CD8-positive, alpha-beta T cell (primary cell): ENCODE measurements at regions of chr6 and their contacts with region 1.

Region 1: GRCh38 chr6:110334423-110335180 is 23.5 kb downstream of the METTL24 start:
- DNase-seq: peak in 1 of 9 experiments; percentile 10
- ATAC-seq: no peak
- H3K4me3 ChIP-seq: no peak overlapping the region
- H3K4me3 Mint-ChIP-seq: no peak overlapping the region
- H3K27ac ChIP-seq: no peak overlapping the region
- H3K27ac Mint-ChIP-seq: no peak overlapping the region
- H3K4me1 ChIP-seq: peaks cover 9% of the 10 kb centered on the region
- H3K4me1 Mint-ChIP-seq: peaks cover 15% of the 10 kb centered on the region
- H3K27me3 ChIP-seq: no peaks in the 10 kb centered on the region
- H3K27me3 Mint-ChIP-seq: no peaks in the 10 kb centered on the region
- CTCF ChIP-seq: no peak

Region 2: GRCh38 chr6:109236115-109237076 is 1098.2 kb before region 1 on chr6:
- CTCF ChIA-PET with region 1: no interaction called
- POLR2A ChIA-PET with region 1: no interaction called
- intact Hi-C with region 1: loop called in 1 of 2 experiments (anchors 2 kb)
- DNase-seq: peak in 3 of 9 experiments; percentile 10 to 38 (median 38)
- ATAC-seq: peak; percentile 51
- H3K4me3 ChIP-seq: no peak overlapping the region
- H3K4me3 Mint-ChIP-seq: peak overlapping the region; percentile 52
- H3K27ac ChIP-seq: peak overlapping the region in 1 of 2 experiments; percentile 55
- H3K27ac Mint-ChIP-seq: peak overlapping the region; percentile 49
- H3K4me1 ChIP-seq: no peaks in the 10 kb centered on the region
- H3K4me1 Mint-ChIP-seq: peaks cover 12% of the 10 kb centered on the region
- H3K27me3 ChIP-seq: no peaks in the 10 kb centered on the region
- H3K27me3 Mint-ChIP-seq: no peaks in the 10 kb centered on the region
- CTCF ChIP-seq: no peak

Region 3: DNA sequence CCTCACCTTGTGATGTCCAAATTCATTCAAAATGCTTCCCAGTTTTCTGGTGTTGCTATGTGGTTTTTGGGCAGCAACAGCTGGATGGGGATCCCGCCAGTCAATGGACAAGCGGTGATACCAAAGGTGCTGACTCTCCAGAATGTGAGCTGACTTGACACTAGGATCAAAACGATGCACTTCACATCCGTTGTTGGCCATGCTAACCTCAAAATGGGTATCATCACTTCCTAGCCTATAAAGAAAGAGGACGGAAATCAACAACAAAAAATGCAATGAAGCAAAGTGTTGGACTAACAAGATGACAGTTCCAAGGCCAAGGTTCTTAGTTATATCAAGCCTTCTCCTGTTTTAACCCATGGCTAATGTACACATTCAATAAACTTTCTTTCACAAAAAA is 35.7 kb before region 1 on chr6:
- CTCF ChIA-PET with region 1: no interaction called
- POLR2A ChIA-PET with region 1: no interaction called
- intact Hi-C with region 1: no loop called
- DNase-seq: peak in 2 of 9 experiments; percentile 17 to 28
- ATAC-seq: no peak
- H3K4me3 ChIP-seq: no peak overlapping the region
- H3K4me3 Mint-ChIP-seq: peak overlapping the region; percentile 68
- H3K27ac ChIP-seq: no peak overlapping the region
- H3K27ac Mint-ChIP-seq: peak overlapping the region; percentile 77
- H3K4me1 ChIP-seq: peaks cover 9% of the 10 kb centered on the region
- H3K4me1 Mint-ChIP-seq: peaks cover 28% of the 10 kb centered on the region
- H3K27me3 ChIP-seq: no peaks in the 10 kb centered on the region
- H3K27me3 Mint-ChIP-seq: no peaks in the 10 kb centered on the region
- CTCF ChIP-seq: no peak